PC-9 (cell line): ENCODE measurements at regions of chr10 and their contacts with region 1.

Region 1: DNA sequence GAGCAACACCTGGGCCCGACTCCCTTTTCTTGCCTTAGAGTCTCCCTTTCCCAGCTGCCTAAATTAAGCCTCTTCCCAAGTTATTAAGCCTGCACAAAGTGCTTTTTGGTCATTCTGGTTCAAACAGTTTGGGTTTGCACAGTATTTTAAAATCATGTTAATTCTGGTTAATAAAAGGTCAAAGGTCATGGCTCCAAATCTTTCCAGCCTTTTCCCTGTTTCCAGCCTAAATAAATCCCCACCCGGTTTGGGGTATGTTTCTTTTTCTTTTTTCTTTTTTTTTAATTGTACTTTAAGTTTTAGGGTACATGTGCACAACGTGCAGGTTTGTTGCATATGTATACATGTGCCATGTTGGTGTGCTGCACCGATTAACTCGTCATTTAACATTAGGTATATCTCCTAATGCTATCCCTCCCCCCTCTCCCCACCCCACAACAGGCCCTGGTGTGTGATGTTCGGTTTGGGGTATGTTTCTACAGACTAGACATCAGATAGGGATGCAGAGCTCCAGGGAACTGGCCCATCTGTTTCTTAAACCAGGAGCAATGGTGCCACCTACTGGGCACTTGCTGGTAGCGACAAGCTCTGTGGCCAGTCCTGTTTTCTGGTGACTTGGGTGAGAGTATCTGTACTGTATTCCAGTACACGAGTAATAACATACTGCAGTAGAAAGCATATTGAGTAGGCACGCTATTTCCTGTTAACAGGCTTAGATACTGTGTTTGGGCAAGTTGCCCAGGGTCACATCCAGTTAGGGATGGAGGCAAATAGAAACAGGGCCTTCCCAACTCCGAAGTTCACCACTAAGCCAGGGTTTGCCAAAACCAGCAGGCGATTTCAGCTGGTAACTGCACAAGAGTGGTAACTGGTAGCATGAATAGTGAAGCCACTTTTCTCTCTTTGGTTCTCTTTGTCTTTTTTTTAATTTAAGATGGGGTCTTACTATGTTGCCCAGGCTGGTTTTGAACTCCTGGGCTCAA is 60.6 kb upstream of the TRIM8 start:
- DNase-seq: peak; percentile 60 to 66
- H3K4me3 ChIP-seq: no peak overlapping the region
- H3K27ac ChIP-seq: no peak overlapping the region
- H3K4me1 ChIP-seq: no peaks in the 10 kb centered on the region
- H3K27me3 ChIP-seq: no peaks in the 10 kb centered on the region
- CTCF ChIP-seq: peak; percentile 83

Region 2: DNA sequence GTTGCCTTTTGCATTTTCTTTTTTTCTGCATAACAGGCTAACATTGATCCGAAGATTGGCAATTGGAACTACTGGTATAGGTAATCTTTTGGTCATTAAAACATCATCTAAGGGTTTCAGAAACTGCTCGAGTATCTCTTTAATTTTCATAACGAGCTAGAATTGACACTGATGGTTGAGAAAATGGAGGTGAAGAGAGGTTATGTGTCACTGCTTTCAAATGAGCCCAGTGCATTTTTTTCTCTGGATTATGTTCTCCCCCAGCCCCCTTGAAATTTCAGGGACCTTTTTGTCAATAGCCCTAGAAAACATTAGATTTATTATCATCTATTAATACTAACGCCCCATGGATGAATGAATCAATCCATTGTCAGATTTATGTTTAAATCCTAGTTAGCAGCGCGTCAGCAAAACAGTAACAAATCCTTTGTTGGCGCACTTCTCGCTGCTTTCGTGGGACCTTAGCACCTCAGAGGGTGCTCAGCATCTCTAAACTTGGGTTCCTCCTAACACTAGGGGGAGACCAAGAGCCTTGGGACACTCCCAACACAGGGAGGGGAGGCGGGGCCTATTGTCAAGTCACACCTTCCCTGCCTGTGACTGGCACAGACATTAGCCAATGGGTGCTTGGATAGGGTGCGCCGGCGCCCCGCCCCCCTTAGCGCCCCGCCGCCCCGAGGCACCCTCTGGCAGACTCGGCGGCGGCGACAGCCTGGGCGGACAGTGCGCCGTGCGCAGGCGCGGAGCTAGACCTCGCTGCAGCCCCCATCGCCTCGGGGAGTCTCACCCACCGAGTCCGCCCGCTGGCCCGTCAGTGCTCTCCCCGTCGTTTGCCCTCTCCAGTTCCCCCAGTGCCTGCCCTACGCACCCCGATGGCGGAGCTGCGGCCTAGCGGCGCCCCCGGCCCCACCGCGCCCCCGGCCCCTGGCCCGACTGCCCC is 80.2 kb before region 1 on chr10 and contains the start of gene SUFU:
- CTCF ChIA-PET with region 1: interaction called, 5 read pairs
- POLR2A ChIA-PET with region 1: no interaction called
- intact Hi-C with region 1: loop called (anchors 5 kb)
- DNase-seq: peak; percentile 85 to 88
- H3K4me3 ChIP-seq: peak within 1 kb of the TSS; percentile 74
- H3K27ac ChIP-seq: no peak within 1 kb of the TSS
- H3K4me1 ChIP-seq: peaks cover 34% of the 10 kb centered on the region
- H3K27me3 ChIP-seq: no peaks in the 10 kb centered on the region
- CTCF ChIP-seq: peak; percentile 79
- total RNA-seq, gene SUFU: 16.9 and 20.2 TPM in 2 replicates

Region 3: DNA sequence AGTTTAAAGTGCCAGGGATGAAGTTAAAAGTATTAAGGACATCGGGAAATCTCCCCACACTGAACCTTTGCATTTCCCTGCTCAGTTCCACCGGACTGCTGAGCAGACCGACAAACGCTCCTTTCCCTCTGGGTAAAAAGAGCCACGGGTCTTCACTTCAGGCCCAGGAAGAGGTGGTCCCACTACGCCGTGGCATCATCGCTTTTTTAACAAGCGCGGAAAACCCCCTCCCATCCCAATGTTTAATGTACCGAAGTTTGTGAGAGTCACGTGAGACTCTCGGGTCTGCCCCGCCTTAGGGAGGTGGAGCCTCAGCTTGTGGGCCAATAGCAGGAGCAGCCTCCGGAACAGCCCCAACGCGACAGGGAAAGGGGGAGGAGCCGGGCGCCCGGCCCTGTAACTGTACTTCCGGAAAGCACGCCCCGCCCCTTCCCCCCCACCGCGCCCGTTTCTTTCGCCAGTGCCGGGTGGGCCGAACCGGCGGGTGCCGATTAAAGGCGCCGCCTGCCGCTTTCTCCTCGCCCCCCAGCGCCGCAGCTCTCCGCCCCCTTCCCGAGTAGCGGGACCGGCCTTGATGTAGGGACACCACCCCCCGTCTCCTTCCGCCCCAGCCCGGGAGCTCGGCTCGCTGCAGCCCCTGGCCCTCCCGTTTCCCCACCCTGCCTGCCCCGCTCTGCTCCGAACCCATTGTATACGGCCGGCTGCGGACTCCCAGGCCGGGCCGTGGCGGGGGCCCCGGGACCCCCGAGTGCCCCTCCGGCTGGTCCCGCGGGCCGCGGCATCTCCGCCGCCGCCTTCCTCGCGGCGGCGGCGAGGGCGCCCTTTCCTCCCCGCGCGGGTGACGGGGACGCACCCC is 58.4 kb after region 1 on chr10:
- CTCF ChIA-PET with region 1: no interaction called
- POLR2A ChIA-PET with region 1: no interaction called
- intact Hi-C with region 1: no loop called
- DNase-seq: peak; percentile 84 to 90
- H3K4me3 ChIP-seq: peak overlapping the region; percentile 70
- H3K27ac ChIP-seq: peak overlapping the region; percentile 75
- H3K4me1 ChIP-seq: 0 out of 2 replicates have a peak, but pooled peaks cover 4% of the 10 kb centered on the region
- H3K27me3 ChIP-seq: no peaks in the 10 kb centered on the region
- CTCF ChIP-seq: no peak